Naive thymus-derived CD4-positive, alpha-beta T cell (primary cell): ENCODE measurements at regions of chr1 and their contacts with region 1.

Region 1: GRCh38 chr1:121519042-121519755 is 334.4 kb downstream of the SRGAP2C start:
- DNase-seq: peak; percentile 62 to 86 (median 83)
- ATAC-seq: peak; percentile 93
- H3K4me3 ChIP-seq: peak overlapping the region; percentile 86
- H3K4me3 Mint-ChIP-seq: peak overlapping the region; percentile 70 to 97 (median 91)
- H3K27ac ChIP-seq: peak overlapping the region; percentile 76
- H3K27ac Mint-ChIP-seq: peak overlapping the region; percentile 68 to 96 (median 90)
- H3K4me1 ChIP-seq: peaks cover 30 to 36% of the 10 kb centered on the region in 2 donors
- H3K4me1 Mint-ChIP-seq: peaks cover 40 to 74% (median 65%) of the 10 kb centered on the region in 7 donors
- H3K27me3 ChIP-seq: no peaks in the 10 kb centered on the region
- H3K27me3 Mint-ChIP-seq: no peaks in the 10 kb centered on the region

Region 2: DNA sequence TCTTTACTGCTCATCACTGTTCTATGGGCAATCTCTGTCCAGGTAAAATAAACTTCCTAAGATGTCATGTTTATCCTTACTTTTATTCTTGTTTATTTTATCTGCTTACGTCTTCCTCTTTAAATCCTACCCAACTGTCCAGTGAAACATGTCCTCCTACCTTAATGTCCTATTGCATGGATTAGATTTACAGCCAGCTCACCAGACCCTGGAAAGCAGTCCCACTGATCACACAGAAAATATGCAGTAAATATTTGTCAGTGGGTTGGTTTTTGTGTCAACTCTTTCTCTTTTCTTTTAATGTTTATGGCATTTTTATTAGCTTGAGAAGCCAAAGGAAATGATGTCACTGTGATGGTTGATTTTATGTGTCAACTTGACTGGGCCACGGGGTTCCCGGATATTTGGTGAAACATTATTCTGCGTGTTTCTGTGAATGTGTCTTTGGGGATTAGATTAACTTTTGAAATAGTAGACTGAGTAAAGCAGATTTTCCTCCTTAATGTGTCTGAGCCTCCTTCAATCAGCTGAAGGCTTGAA is 76.1 kb before region 1 on chr1:
- CTCF ChIA-PET with region 1: interaction called, 6 read pairs
- POLR2A ChIA-PET with region 1: interaction called, 6 read pairs
- intact Hi-C with region 1: loop called (anchors 1 to 2 kb)
- DNase-seq: no peak
- ATAC-seq: no peak
- H3K4me3 ChIP-seq: no peak overlapping the region
- H3K4me3 Mint-ChIP-seq: no peak overlapping the region
- H3K27ac ChIP-seq: no peak overlapping the region
- H3K27ac Mint-ChIP-seq: no peak overlapping the region
- H3K4me1 ChIP-seq: no peaks in the 10 kb centered on the region
- H3K4me1 Mint-ChIP-seq: peaks cover 0 to 17% (median 2%) of the 10 kb centered on the region in 7 donors
- H3K27me3 ChIP-seq: no peaks in the 10 kb centered on the region
- H3K27me3 Mint-ChIP-seq: peaks cover 0 to 4% (median 0%) of the 10 kb centered on the region in 5 donors

Region 3: GRCh38 chr1:121483961-121484424 is 35.2 kb before region 1 on chr1:
- CTCF ChIA-PET with region 1: no interaction called
- POLR2A ChIA-PET with region 1: interaction called, 3 read pairs
- intact Hi-C with region 1: loop called in 1 of 2 experiments (anchors 2 kb)
- DNase-seq: no peak
- ATAC-seq: no peak
- H3K4me3 ChIP-seq: no peak overlapping the region
- H3K4me3 Mint-ChIP-seq: no peak overlapping the region
- H3K27ac ChIP-seq: no peak overlapping the region
- H3K27ac Mint-ChIP-seq: peak overlapping the region in 1 of 9 donors; percentile 40
- H3K4me1 ChIP-seq: no peaks in the 10 kb centered on the region
- H3K4me1 Mint-ChIP-seq: peaks cover 6 to 28% (median 13%) of the 10 kb centered on the region in 7 donors
- H3K27me3 ChIP-seq: no peaks in the 10 kb centered on the region
- H3K27me3 Mint-ChIP-seq: no peaks in the 10 kb centered on the region

Region 4: GRCh38 chr1:121558514-121558913 is 39.3 kb after region 1 on chr1:
- CTCF ChIA-PET with region 1: no interaction called
- POLR2A ChIA-PET with region 1: interaction called, 25 read pairs
- intact Hi-C with region 1: no loop called
- DNase-seq: no peak
- ATAC-seq: no peak
- H3K4me3 ChIP-seq: no peak overlapping the region
- H3K4me3 Mint-ChIP-seq: peak overlapping the region in 5 of 10 donors; percentile 36 to 68 (median 48)
- H3K27ac ChIP-seq: no peak overlapping the region
- H3K27ac Mint-ChIP-seq: peak overlapping the region in 3 of 9 donors; percentile 74 to 85 (median 81)
- H3K4me1 ChIP-seq: peaks cover 4 to 6% of the 10 kb centered on the region in 2 donors
- H3K4me1 Mint-ChIP-seq: peaks cover 5 to 57% (median 19%) of the 10 kb centered on the region in 7 donors
- H3K27me3 ChIP-seq: no peaks in the 10 kb centered on the region
- H3K27me3 Mint-ChIP-seq: no peaks in the 10 kb centered on the region

Region 5: DNA sequence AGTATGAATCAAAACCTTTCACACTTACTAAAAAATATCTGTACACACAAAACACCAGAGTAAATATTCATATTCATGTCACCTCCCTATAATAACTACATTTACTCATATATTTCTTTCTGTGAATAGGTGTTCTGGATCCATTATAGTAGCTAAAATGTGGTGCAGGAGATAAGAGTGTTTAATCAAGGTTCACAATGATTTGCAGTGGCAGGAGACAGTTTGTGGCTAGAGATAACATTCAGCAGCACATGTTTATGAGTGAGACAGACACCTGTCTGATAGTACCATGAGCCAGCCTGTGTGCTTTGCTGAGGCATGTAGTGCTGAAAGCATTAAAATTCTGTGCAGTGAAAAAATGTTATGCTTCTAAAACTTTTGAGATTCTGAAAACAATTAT is 75.9 kb after region 1 on chr1:
- CTCF ChIA-PET with region 1: no interaction called
- POLR2A ChIA-PET with region 1: interaction called, 3 read pairs
- intact Hi-C with region 1: loop called in 1 of 2 experiments (anchors 10 kb)
- DNase-seq: no peak
- ATAC-seq: no peak
- H3K4me3 ChIP-seq: no peak overlapping the region
- H3K4me3 Mint-ChIP-seq: no peak overlapping the region
- H3K27ac ChIP-seq: no peak overlapping the region
- H3K27ac Mint-ChIP-seq: peak overlapping the region in 6 of 9 donors; percentile 5 to 72 (median 26)
- H3K4me1 ChIP-seq: peaks cover 0 to 5% of the 10 kb centered on the region in 2 donors
- H3K4me1 Mint-ChIP-seq: peaks cover 0 to 37% (median 21%) of the 10 kb centered on the region in 7 donors
- H3K27me3 ChIP-seq: no peaks in the 10 kb centered on the region
- H3K27me3 Mint-ChIP-seq: no peaks in the 10 kb centered on the region